ENCODE measurements at regions of chr3 and their contacts with region 1.

Region 1: GRCh38 chr3:1469687-1470086 is 376.9 kb downstream of the CNTN6 start:
- DNase-seq: no peak

Region 2: DNA sequence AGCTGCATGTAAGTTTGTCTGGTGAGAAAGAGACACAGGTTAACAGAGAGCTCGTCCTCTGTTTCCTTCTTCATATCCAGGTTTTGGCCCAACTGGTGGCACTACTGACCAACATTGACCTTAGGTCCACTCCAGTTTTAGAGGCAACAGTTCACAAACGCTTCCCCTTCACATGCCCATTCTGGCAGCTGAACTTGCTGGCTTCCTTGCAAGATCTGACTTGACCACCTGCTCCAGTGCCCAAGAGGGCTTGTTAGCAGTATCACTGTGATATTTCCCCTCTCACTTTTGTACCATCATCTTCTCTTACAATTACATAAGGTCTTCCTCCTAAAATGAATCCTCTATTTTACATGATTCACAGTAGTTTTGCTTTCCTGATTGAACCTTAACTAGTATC is 305.6 kb before region 1 on chr3:
- intact Hi-C with region 1: no loop called
- DNase-seq: no peak

Region 3: GRCh38 chr3:2311022-2311421 is 841.3 kb after region 1 on chr3:
- intact Hi-C with region 1: loop called in 1 of 2 experiments (anchors 5 kb)
- DNase-seq: no peak